ENCODE measurements at regions of chr3 and their contacts with region 1.

Region 1: DNA sequence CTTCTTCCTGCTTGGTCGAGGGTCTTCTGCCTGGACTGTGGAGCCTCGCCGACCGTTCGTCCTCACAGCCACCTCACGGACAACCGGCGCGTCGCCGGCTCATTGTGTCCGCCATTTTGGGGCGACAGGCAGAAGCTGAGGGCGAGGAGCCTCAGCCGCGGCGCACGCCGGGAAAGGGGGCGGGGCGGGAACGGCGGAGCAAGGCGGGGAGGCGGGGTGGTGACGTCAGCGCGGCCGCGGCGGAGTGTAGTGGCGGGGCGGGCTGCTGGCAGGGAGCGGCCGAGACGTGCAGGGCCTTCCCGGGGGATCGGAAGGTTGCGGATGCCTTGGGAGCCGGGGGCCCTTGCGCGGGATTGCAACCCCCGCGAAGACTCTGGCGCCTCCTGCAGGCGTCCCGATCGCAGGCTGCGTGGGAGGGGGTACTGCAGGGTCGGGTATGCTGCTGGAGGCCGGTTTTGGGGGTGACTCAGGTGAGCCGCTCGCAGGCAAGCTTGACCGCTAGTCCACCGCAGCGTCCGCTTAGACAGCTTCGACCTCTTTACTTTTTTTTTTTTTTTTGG is at the start of gene WDR82:
- DNase-seq: peak; percentile 95
- ATAC-seq: peak; percentile 86
- H3K4me3 ChIP-seq: peak within 1 kb of the TSS; percentile 67 to 94 (median 77)
- H3K4me3 Mint-ChIP-seq: peak within 1 kb of the TSS; percentile 95
- H3K27ac ChIP-seq: peak within 1 kb of the TSS; percentile 83 to 87
- H3K27ac Mint-ChIP-seq: peak within 1 kb of the TSS; percentile 100
- H3K4me1 ChIP-seq: peaks cover 35 to 51% of the 10 kb centered on the region in 2 donors
- H3K4me1 Mint-ChIP-seq: peaks cover 47% of the 10 kb centered on the region
- H3K27me3 ChIP-seq: no peaks in the 10 kb centered on the region
- H3K27me3 Mint-ChIP-seq: no peaks in the 10 kb centered on the region
- CTCF ChIP-seq: peak; percentile 24
- total RNA-seq, gene WDR82: 94.0 and 101 TPM in 2 replicates

Region 2: DNA sequence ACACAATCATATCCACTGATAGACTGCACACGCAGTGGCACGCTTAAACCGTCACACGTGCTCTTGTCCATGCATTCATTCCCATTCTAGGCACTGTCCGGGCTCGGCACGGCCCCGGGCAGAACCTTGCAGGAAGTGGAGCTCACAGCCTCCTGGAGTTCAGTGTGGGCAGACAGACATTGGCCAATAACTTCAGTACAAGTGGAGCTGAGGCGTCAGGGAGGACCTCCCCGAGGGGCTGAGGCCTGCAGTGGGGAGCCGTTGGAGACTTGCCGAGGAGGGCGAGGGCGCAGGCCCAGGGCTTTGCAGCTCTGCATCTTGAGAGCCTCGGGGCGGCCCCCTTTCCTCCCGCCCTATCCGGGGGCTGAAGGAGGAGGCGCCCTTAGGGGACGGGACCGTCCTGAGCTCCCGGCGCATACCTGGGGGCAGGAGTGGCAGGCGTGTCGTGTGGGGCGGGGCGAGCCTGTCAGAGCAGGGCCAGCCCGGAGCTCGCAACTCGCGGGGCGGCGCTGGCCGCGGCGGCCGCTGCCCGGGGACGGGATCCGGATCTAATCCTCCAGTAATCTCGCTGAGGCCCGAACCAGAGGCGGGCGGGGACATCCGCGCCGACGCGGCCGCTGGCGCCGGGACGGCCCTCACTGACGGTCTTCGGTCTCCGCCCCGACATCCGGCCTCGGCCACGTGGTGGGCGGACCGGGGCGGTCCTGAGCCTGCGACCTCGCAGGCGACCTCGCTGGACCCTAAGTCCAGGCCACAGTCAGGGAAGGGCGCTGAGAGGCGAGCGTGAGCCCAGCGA is 295.6 kb before region 1 on chr3 and contains the start of gene ACY1:
- CTCF ChIA-PET with region 1: no interaction called
- POLR2A ChIA-PET with region 1: no interaction called
- intact Hi-C with region 1: no loop called
- DNase-seq: peak; percentile 72
- ATAC-seq: peak; percentile 79
- H3K4me3 ChIP-seq: peak within 1 kb of the TSS; percentile 47 to 68 (median 58)
- H3K4me3 Mint-ChIP-seq: peak within 1 kb of the TSS; percentile 92
- H3K27ac ChIP-seq: peak within 1 kb of the TSS; percentile 65 to 76
- H3K27ac Mint-ChIP-seq: peak within 1 kb of the TSS; percentile 93
- H3K4me1 ChIP-seq: peaks cover 10 to 19% of the 10 kb centered on the region in 2 donors
- H3K4me1 Mint-ChIP-seq: peaks cover 17% of the 10 kb centered on the region
- H3K27me3 ChIP-seq: no peaks in the 10 kb centered on the region
- H3K27me3 Mint-ChIP-seq: no peaks in the 10 kb centered on the region
- CTCF ChIP-seq: peak; percentile 46
- total RNA-seq, gene ACY1: 11.6 and 14.6 TPM in 2 replicates

Region 3: DNA sequence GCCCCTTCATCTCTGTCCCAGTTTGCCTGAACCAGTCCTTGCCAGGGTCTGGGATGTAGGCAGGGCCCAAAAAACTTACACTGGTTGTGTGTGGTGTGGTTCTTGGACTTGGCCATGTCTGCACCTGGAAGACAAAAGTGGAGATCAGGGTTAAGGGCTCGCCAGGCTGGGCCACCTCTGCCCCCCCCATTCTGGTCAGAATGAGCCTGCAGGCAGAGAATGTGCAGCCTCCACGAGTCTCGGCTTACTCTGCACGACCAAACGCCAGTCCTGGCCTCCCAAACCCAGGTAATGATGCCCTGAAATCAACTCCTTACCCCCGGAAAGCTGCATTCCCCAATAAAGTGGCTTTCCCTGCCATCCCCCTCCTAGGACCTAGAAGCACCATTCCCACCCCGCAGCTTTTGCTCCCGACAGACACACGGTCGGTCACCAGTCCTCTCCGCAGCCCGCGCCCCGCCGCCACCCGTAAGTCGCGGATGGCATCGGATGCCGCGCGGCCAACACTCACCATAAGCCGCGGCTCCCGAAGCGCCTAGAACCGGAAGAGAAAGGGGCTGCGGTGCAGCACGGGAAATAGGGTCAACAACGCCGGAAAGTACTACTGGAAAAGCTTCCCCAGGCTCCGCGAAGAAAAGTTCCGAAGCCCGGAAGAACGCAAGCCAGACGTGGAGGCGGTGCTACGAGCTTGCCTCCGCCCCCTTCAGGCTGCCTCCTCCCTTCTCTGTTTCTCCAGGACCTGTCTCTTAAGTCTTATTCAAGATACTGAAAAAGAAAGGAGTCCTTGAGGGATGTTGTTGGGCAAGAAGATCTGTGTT is 283.0 kb before region 1 on chr3 and contains the start of gene RPL29:
- CTCF ChIA-PET with region 1: no interaction called
- POLR2A ChIA-PET with region 1: interaction called, 3 read pairs
- intact Hi-C with region 1: loop called (anchors 5 kb)
- DNase-seq: peak; percentile 95
- ATAC-seq: peak; percentile 98
- H3K4me3 ChIP-seq: peak within 1 kb of the TSS; percentile 89 to 99 (median 94)
- H3K4me3 Mint-ChIP-seq: peak within 1 kb of the TSS; percentile 100
- H3K27ac ChIP-seq: peak within 1 kb of the TSS; percentile 87 to 91
- H3K27ac Mint-ChIP-seq: peak within 1 kb of the TSS; percentile 100
- H3K4me1 ChIP-seq: peaks cover 13 to 19% of the 10 kb centered on the region in 2 donors
- H3K4me1 Mint-ChIP-seq: peaks cover 33% of the 10 kb centered on the region
- H3K27me3 ChIP-seq: no peaks in the 10 kb centered on the region
- H3K27me3 Mint-ChIP-seq: peaks cover 6% of the 10 kb centered on the region
- CTCF ChIP-seq: no peak
- total RNA-seq, gene RPL29: 1,460 and 1,552 TPM in 2 replicates

Region 4: DNA sequence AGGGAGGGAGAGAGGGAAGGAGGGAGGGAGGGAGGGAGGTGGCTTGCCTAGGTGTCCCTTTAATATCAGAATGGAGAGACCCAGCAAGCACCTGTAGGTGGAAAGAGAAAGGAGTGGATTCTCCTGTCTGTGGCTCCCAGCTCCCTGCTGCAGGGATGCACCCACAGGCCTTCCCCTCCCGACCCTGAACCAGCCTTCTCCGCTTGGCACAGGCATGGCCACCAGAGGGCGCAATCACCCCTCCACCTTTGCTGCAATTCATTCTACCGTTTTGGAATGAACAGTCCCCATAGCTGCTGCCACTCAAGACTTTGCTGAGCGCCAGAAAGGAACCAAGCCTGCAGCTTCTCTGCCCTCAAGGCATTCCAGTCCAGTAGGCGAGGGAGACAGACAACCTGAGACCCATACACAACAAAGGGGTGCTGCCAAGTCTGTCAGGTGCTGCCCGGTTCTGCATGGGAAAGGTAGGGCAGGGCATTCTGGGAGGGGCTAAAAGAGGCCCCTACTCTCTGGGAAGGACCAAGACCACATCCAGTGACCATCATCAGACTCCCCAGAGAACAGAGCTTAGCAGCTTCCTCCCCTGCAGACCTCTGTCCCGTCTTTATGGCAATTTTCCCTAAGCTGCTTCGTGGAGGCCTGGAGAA is 58.1 kb before region 1 on chr3:
- CTCF ChIA-PET with region 1: interaction called, 265 read pairs
- POLR2A ChIA-PET with region 1: interaction called, 38 read pairs
- intact Hi-C with region 1: loop called (anchors 1 kb)
- DNase-seq: peak; percentile 85
- ATAC-seq: peak; percentile 59
- H3K4me3 ChIP-seq: no peak overlapping the region
- H3K4me3 Mint-ChIP-seq: peak overlapping the region; percentile 66
- H3K27ac ChIP-seq: no peak overlapping the region
- H3K27ac Mint-ChIP-seq: peak overlapping the region; percentile 86
- H3K4me1 ChIP-seq: peaks cover 64 to 90% of the 10 kb centered on the region in 2 donors
- H3K4me1 Mint-ChIP-seq: peaks cover 78% of the 10 kb centered on the region
- H3K27me3 ChIP-seq: no peaks in the 10 kb centered on the region
- H3K27me3 Mint-ChIP-seq: no peaks in the 10 kb centered on the region
- CTCF ChIP-seq: peak; percentile 83

Region 5: GRCh38 chr3:52238761-52239701 is 39.6 kb before region 1 on chr3 and contains the start of gene TWF2:
- CTCF ChIA-PET with region 1: interaction called, 50 read pairs
- POLR2A ChIA-PET with region 1: interaction called, 12 read pairs
- intact Hi-C with region 1: loop called (anchors 1 kb)
- DNase-seq: peak; percentile 92
- ATAC-seq: peak; percentile 90
- H3K4me3 ChIP-seq: peak within 1 kb of the TSS; percentile 75 to 99 (median 93)
- H3K4me3 Mint-ChIP-seq: peak within 1 kb of the TSS; percentile 99
- H3K27ac ChIP-seq: peak within 1 kb of the TSS; percentile 53 to 63
- H3K27ac Mint-ChIP-seq: peak within 1 kb of the TSS; percentile 93
- H3K4me1 ChIP-seq: peaks cover 41 to 56% of the 10 kb centered on the region in 2 donors
- H3K4me1 Mint-ChIP-seq: peaks cover 61% of the 10 kb centered on the region
- H3K27me3 ChIP-seq: no peaks in the 10 kb centered on the region
- H3K27me3 Mint-ChIP-seq: no peaks in the 10 kb centered on the region
- CTCF ChIP-seq: peak; percentile 68
- total RNA-seq, gene TWF2: 53.5 and 60.3 TPM in 2 replicates

Region 6: GRCh38 chr3:52291508-52292181 is 13.1 kb after region 1 on chr3:
- CTCF ChIA-PET with region 1: interaction called, 51 read pairs
- POLR2A ChIA-PET with region 1: interaction called, 52 read pairs
- intact Hi-C with region 1: loop called (anchors 1 kb)
- DNase-seq: peak; percentile 65
- ATAC-seq: peak; percentile 31
- H3K4me3 ChIP-seq: no peak overlapping the region
- H3K4me3 Mint-ChIP-seq: peak overlapping the region; percentile 37
- H3K27ac ChIP-seq: no peak overlapping the region
- H3K27ac Mint-ChIP-seq: peak overlapping the region; percentile 33
- H3K4me1 ChIP-seq: peaks cover 12 to 15% of the 10 kb centered on the region in 2 donors
- H3K4me1 Mint-ChIP-seq: peaks cover 30% of the 10 kb centered on the region
- H3K27me3 ChIP-seq: no peaks in the 10 kb centered on the region
- H3K27me3 Mint-ChIP-seq: no peaks in the 10 kb centered on the region
- CTCF ChIP-seq: peak; percentile 69

Region 7: DNA sequence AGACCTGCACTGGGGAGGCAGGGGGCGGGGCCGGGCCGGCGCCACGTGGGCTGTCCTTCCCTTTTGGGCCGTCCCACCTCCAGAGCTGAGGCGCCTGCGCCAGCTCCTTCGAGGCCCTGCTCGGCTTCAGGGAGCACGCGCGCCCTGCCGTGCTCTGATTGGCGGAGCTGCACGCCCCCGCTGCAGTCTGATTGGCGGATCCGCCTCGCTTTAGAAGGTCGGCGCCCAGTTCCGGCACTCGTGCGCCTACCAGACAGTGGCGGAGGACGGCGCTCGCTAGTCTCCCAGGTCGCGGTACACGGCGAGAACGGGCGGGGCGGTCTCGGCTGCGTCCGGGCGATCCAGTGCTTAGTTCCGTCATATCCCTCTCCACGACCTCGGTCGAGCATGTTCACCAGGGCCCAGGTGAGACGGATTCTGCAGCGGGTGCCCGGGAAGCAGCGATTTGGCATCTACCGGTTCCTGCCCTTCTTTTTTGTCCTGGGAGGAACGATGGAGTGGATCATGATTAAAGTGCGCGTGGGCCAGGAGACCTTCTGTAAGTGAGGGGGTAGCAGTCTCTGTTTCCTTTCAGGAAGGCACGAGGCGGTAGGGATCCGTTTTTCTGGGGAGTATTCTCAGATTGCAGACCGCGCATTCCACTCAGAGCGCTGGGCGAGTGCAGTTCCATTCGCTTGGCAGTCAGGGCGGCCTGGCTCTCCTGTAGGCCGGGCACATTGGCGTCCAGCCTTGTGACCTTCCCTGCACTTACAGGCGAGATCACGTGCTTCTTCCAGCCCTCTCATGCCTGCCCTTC is 258.0 kb after region 1 on chr3 and contains the start of gene UQCC5:
- CTCF ChIA-PET with region 1: no interaction called
- POLR2A ChIA-PET with region 1: no interaction called
- intact Hi-C with region 1: loop called (anchors 5 kb)
- DNase-seq: peak; percentile 99
- ATAC-seq: peak; percentile 84
- H3K4me3 ChIP-seq: peak within 1 kb of the TSS; percentile 90 to 99 (median 95)
- H3K4me3 Mint-ChIP-seq: peak within 1 kb of the TSS; percentile 99
- H3K27ac ChIP-seq: peak within 1 kb of the TSS; percentile 84 to 93
- H3K27ac Mint-ChIP-seq: peak within 1 kb of the TSS; percentile 99
- H3K4me1 ChIP-seq: peaks cover 34 to 51% of the 10 kb centered on the region in 2 donors
- H3K4me1 Mint-ChIP-seq: peaks cover 46% of the 10 kb centered on the region
- H3K27me3 ChIP-seq: peaks cover 0 to 13% (median 0%) of the 10 kb centered on the region in 4 experiments
- H3K27me3 Mint-ChIP-seq: no peaks in the 10 kb centered on the region
- CTCF ChIP-seq: no peak
- total RNA-seq, gene UQCC5: 10.3 and 16.4 TPM in 2 replicates

Region 8: DNA sequence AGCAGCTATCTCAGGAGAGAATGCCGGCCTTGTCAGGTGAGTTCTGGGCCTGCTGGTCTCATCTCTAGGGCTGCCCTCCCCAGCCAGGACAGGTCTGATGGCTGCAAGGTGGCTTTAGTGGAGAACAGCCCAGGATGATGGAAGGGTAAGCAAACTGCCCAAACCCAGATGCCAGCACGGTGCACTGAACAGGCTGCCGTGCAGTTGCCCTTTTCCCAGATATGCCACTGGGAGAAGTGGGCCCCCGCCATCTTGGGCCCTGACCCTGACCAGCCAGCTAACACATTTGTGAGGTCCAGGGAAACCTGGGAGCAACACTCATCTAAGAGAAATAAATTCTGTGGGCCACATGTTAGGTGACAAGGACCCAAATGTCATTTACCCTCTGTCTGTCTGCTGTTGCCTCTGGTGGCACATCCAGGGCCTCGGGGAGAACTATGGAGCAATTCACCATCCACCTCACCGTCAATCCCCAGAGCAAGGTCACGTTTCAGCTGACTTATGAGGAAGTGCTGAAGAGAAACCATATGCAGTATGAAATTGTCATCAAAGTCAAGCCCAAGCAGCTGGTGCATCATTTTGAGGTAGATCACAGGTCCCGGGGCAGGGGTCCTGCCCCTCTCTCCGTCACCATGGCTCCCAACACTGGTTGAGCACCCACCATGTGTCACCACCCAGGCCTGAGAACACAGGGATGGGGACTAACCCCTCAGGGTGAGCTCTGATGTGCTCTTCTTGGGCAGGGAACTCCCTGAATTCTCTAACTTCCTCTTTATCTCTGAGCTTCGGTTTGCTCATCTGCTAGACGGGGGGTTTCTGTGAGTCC is 500.6 kb after region 1 on chr3:
- CTCF ChIA-PET with region 1: no interaction called
- POLR2A ChIA-PET with region 1: no interaction called
- intact Hi-C with region 1: no loop called
- DNase-seq: peak; percentile 92
- ATAC-seq: peak; percentile 93
- H3K4me3 ChIP-seq: peak overlapping the region in 1 of 5 experiments; percentile 16
- H3K4me3 Mint-ChIP-seq: peak overlapping the region; percentile 36
- H3K27ac ChIP-seq: peak overlapping the region; percentile 88 to 90
- H3K27ac Mint-ChIP-seq: peak overlapping the region; percentile 91
- H3K4me1 ChIP-seq: peaks cover 14 to 19% of the 10 kb centered on the region in 2 donors
- H3K4me1 Mint-ChIP-seq: peaks cover 14% of the 10 kb centered on the region
- H3K27me3 ChIP-seq: no peaks in the 10 kb centered on the region
- H3K27me3 Mint-ChIP-seq: peaks cover 4% of the 10 kb centered on the region
- CTCF ChIP-seq: no peak

Measured in B cell (primary cell).